ENCODE measurements at regions of chr12 and their contacts with region 1.

Region 1: DNA sequence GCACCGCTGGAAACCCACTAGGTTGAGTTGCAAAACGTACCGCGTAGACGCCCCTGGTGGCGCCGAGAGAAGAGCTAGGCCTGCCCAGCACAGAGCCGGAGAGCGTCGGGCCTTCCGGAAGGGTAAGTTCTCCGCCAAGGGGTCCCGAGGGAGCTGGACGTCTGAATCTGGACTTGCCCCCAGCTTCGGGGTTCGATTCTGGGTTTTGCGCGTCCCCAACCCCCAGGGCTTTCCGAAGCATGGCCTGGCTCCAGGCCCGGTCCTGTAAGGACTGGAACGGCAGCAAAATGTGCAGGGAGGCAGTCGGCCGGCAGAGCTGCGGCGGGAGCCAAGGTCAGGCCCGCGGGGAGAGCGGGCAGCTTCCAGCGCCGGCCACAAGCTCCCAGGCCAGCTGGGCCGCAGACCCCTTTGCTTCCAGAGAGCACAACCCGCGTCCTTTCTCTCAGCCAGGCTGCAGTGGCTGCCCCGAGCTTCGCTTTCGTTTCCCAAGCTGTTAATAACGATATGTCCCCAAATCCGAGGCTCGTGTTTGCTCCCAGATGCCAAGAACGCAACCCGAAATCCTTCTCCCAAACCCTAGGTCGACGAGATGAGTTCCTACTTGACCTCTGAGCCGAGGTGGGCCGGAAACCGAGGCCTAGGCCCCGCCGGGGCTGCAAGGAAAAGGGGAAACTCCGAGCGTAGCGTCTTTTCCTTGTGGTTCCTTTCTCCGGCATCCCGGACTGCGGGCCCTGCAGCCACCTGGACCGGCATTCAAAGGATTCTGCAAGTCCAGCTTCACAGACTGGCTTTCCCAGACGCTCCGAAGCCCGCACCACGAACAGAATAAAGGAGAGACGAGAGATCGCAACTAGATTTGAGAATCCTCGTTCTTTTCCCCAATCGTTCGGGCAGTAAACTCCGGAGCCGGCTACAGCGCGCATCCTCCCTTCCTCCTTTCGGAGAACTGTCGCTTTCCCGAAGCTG is 3.2 kb upstream of the TBX5 start:
- DNase-seq: no peak
- H3K4me3 ChIP-seq: peak overlapping the region; percentile 83
- H3K27ac ChIP-seq: peak overlapping the region; percentile 94
- H3K27me3 ChIP-seq: no peaks in the 10 kb centered on the region
- CTCF ChIP-seq: no peak

Region 2: GRCh38 chr12:113727651-113728061 is 681.5 kb before region 1 on chr12:
- CTCF ChIA-PET with region 1: no interaction called
- POLR2A ChIA-PET with region 1: no interaction called
- DNase-seq: no peak
- H3K4me3 ChIP-seq: no peak overlapping the region
- H3K27ac ChIP-seq: no peak overlapping the region
- H3K27me3 ChIP-seq: no peaks in the 10 kb centered on the region
- CTCF ChIP-seq: no peak

Region 3: DNA sequence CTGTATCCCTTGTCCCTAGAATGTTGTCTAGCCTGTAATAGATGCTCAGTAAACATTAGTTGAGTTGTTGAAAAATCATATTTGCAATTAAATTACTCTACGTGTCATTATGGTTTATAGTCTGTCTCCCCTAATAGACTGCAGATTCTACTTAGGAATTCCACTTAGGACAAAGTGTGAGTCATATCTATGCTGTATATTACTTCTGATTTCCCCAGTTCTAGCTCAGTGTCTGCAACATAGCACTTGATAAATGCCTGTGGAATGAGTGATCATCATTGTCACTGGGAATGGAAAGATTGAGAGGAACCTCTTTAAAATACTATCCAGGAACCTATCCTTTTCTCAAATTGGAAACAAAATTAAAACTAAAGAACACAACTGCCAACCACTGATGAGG is 102.5 kb before region 1 on chr12:
- CTCF ChIA-PET with region 1: no interaction called
- POLR2A ChIA-PET with region 1: no interaction called
- DNase-seq: no peak
- H3K4me3 ChIP-seq: no peak overlapping the region
- H3K27ac ChIP-seq: no peak overlapping the region
- H3K27me3 ChIP-seq: peaks cover 2% of the 10 kb centered on the region
- CTCF ChIP-seq: no peak

Region 4: GRCh38 chr12:114396153-114396868 is 12.9 kb before region 1 on chr12:
- CTCF ChIA-PET with region 1: no interaction called
- POLR2A ChIA-PET with region 1: interaction called, 13 read pairs
- DNase-seq: no peak
- H3K4me3 ChIP-seq: peak overlapping the region; percentile 37
- H3K27ac ChIP-seq: peak overlapping the region; percentile 65
- H3K27me3 ChIP-seq: no peaks in the 10 kb centered on the region
- CTCF ChIP-seq: no peak